ENCODE measurements at regions of chr19 and their contacts with region 1.

Region 1: GRCh38 chr19:56314562-56315077 is at the start of gene ZSCAN5A:
- DNase-seq: peak; percentile 98 to 100 (median 99)
- H3K4me3 ChIP-seq: peak within 1 kb of the TSS; percentile 54 to 98
- H3K4me3 Mint-ChIP-seq: peak within 1 kb of the TSS; percentile 88 to 96 (median 92)
- H3K27ac ChIP-seq: peak within 1 kb of the TSS; percentile 95
- H3K27ac Mint-ChIP-seq: peak within 1 kb of the TSS; percentile 96 to 99 (median 98)
- H3K4me1 ChIP-seq: peaks cover 14% of the 10 kb centered on the region
- H3K4me1 Mint-ChIP-seq: peaks cover 6 to 32% (median 21%) of the 10 kb centered on the region in 4 donors
- H3K27me3 ChIP-seq: no peaks in the 10 kb centered on the region
- H3K27me3 Mint-ChIP-seq: no peaks in the 10 kb centered on the region
- total RNA-seq, gene ZSCAN5A: 12.2 to 14.6 TPM

Region 2: GRCh38 chr19:56121180-56122167 is 193.1 kb before region 1 on chr19 and contains the start of gene ZNF787:
- CTCF ChIA-PET with region 1: no interaction called
- POLR2A ChIA-PET with region 1: interaction called, 6 read pairs
- intact Hi-C with region 1: loop called (anchors 1 kb)
- DNase-seq: peak; percentile 95 to 98 (median 98)
- H3K4me3 ChIP-seq: peak within 1 kb of the TSS; percentile 60 to 67
- H3K4me3 Mint-ChIP-seq: peak within 1 kb of the TSS; percentile 86 to 97 (median 88)
- H3K27ac ChIP-seq: peak within 1 kb of the TSS; percentile 92
- H3K27ac Mint-ChIP-seq: peak within 1 kb of the TSS; percentile 89 to 97 (median 96)
- H3K4me1 ChIP-seq: peaks cover 19% of the 10 kb centered on the region
- H3K4me1 Mint-ChIP-seq: peaks cover 21 to 49% (median 37%) of the 10 kb centered on the region in 4 donors
- H3K27me3 ChIP-seq: no peaks in the 10 kb centered on the region
- H3K27me3 Mint-ChIP-seq: no peaks in the 10 kb centered on the region
- total RNA-seq, gene ZNF787: 29.6 to 34.1 TPM

Region 3: GRCh38 chr19:56140583-56141416 is 173.8 kb before region 1 on chr19 and contains the start of gene ZNF444:
- CTCF ChIA-PET with region 1: no interaction called
- POLR2A ChIA-PET with region 1: no interaction called
- intact Hi-C with region 1: loop called (anchors 1 kb)
- DNase-seq: peak; percentile 99 to 100 (median 99)
- H3K4me3 ChIP-seq: peak within 1 kb of the TSS; percentile 71 to 96
- H3K4me3 Mint-ChIP-seq: peak within 1 kb of the TSS; percentile 87 to 98 (median 94)
- H3K27ac ChIP-seq: peak within 1 kb of the TSS; percentile 73
- H3K27ac Mint-ChIP-seq: peak within 1 kb of the TSS; percentile 89 to 98 (median 96)
- H3K4me1 ChIP-seq: peaks cover 22% of the 10 kb centered on the region
- H3K4me1 Mint-ChIP-seq: peaks cover 24 to 46% (median 33%) of the 10 kb centered on the region in 4 donors
- H3K27me3 ChIP-seq: no peaks in the 10 kb centered on the region
- H3K27me3 Mint-ChIP-seq: no peaks in the 10 kb centered on the region
- total RNA-seq, gene ZNF444: 33.2 to 42.8 TPM

Region 4: DNA sequence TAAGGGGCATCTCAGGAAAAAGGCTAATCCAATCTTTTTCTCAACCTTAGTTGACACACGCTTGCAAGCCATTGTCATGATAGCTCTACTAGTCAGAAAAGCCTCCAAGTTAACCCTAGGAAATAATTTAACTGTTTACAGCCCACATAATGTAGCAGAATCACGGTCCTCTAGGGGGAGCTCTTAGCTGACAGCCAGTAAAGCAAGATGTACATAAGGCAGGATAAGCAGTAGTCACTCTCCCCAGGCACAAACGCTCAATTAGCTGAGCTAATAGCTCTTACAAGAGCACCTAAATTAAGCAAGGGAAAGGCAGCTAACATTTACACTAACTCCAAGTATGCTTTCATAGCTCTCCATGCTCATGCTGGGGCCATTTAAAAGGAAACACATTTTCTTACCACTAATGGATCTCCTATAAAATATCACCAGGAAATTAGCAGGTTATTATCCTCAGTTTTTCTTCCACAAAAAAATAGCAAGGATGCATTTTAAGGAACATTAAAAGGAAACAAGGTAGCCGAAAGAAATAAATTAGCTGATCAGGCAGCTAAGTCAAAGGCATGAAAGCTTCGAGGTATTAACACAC is 33.8 kb after region 1 on chr19:
- CTCF ChIA-PET with region 1: no interaction called
- POLR2A ChIA-PET with region 1: no interaction called
- intact Hi-C with region 1: no loop called
- DNase-seq: no peak
- H3K4me3 ChIP-seq: no peak overlapping the region
- H3K4me3 Mint-ChIP-seq: no peak overlapping the region
- H3K27ac ChIP-seq: no peak overlapping the region
- H3K27ac Mint-ChIP-seq: no peak overlapping the region
- H3K4me1 ChIP-seq: no peaks in the 10 kb centered on the region
- H3K4me1 Mint-ChIP-seq: peaks cover 0 to 1% (median 0%) of the 10 kb centered on the region in 4 donors
- H3K27me3 ChIP-seq: no peaks in the 10 kb centered on the region
- H3K27me3 Mint-ChIP-seq: peaks cover 1 to 4% of the 10 kb centered on the region in 2 donors

Region 5: GRCh38 chr19:56476651-56477428 is 162.2 kb after region 1 on chr19 and contains the start of gene ZNF667:
- CTCF ChIA-PET with region 1: no interaction called
- POLR2A ChIA-PET with region 1: no interaction called
- intact Hi-C with region 1: no loop called
- DNase-seq: peak in 3 of 5 donors; percentile 3 to 23 (median 5)
- H3K4me3 ChIP-seq: no peak within 1 kb of the TSS
- H3K4me3 Mint-ChIP-seq: peak within 1 kb of the TSS in 7 of 8 donors; percentile 44 to 87 (median 79)
- H3K27ac ChIP-seq: no peak within 1 kb of the TSS
- H3K27ac Mint-ChIP-seq: peak within 1 kb of the TSS in 4 of 7 donors; percentile 29 to 91 (median 63)
- H3K4me1 ChIP-seq: no peaks in the 10 kb centered on the region
- H3K4me1 Mint-ChIP-seq: peaks cover 0 to 19% (median 6%) of the 10 kb centered on the region in 4 donors
- H3K27me3 ChIP-seq: no peaks in the 10 kb centered on the region
- H3K27me3 Mint-ChIP-seq: peaks cover 11 to 19% of the 10 kb centered on the region in 2 donors
- total RNA-seq, gene ZNF667: 0.15 TPM in 1 of 2 experiments, not detected in the other

Region 6: GRCh38 chr19:56637976-56638555 is 323.4 kb after region 1 on chr19:
- CTCF ChIA-PET with region 1: no interaction called
- POLR2A ChIA-PET with region 1: no interaction called
- intact Hi-C with region 1: no loop called
- DNase-seq: peak in 2 of 5 donors; percentile 6 to 19
- H3K4me3 ChIP-seq: no peak overlapping the region
- H3K4me3 Mint-ChIP-seq: no peak overlapping the region
- H3K27ac ChIP-seq: no peak overlapping the region
- H3K27ac Mint-ChIP-seq: peak overlapping the region in 1 of 7 donors; percentile 21
- H3K4me1 ChIP-seq: no peaks in the 10 kb centered on the region
- H3K4me1 Mint-ChIP-seq: peaks cover 0 to 4% (median 1%) of the 10 kb centered on the region in 4 donors
- H3K27me3 ChIP-seq: no peaks in the 10 kb centered on the region
- H3K27me3 Mint-ChIP-seq: no peaks in the 10 kb centered on the region

Measured in CD4-positive, alpha-beta memory T cell (primary cell).